Posterior vena cava (tissue), 2 donors: ENCODE measurements at regions of chr3 and their contacts with region 1.

Region 1: GRCh38 chr3:40179016-40179415 is 130.5 kb upstream of the EIF1B start:
- DNase-seq: peak; percentile 88

Region 2: GRCh38 chr3:39707314-39707909 is 471.6 kb before region 1 on chr3:
- intact Hi-C with region 1: loop called in 1 of 2 experiments (anchors 5 kb)
- DNase-seq: no peak

Region 3: DNA sequence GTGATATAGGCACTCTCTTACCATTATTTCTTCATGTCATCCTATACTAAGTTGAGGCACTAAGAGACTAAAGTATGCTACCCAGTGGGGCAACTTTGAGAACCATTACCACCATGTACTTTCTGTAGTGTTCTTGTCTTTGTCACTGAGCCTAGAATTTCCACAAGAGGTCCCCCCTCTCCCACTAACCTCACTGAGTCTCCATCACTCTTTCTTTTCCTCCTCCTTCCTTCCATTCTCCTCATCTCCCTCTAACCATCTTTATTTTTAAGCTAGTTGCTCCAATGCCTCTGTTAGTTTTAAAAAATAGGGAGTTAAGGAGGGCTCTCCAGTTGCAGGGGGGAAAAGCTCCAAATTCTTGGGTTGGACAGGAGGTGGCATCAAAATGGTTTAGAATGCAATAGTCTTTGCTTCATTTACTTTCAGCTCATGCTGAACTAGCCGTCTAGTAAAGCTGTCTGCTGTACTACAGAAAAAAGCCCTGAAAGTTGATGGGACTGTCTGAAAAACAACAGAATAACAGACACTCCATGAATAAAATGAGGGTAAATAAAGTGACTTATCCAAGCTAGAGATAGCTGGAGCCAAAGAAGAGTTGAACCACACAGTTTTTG is 454.7 kb before region 1 on chr3:
- intact Hi-C with region 1: loop called in 1 of 2 experiments (anchors 10 kb)
- DNase-seq: no peak

Region 4: DNA sequence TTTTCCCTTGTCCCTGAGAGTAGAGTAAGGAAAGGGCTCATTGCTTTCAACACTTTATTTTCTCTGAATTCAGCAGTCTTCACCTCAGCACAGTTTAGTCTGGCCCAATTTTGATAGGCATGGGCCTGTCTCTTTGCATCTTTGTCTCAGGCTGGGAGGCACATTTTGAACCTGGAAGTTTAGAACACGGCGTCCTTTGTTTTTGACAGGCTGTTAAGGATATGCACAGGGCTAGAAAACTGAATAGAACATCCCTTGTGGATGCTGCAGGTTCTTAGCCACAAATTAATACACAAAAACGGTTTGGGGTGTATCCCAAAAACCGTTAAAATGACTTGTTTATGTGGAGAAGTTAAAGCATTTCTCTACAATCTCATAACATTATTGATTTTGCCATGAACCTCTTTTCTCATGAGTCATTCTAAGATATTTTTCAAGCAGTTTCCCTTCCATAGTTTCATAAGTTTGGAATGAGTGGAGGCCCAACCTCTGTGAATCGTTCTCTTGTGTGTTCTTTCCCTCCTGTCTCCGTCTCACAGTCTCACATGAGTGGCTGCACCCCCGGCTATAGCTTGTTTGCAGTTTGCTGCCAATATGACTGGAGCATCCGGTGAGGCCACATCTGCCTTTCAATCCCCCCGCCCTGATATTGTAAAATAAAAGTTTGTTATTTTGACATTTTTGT is 62.4 kb before region 1 on chr3:
- intact Hi-C with region 1: no loop called
- DNase-seq: no peak

Region 5: GRCh38 chr3:40247714-40248454 is 68.9 kb after region 1 on chr3:
- intact Hi-C with region 1: no loop called
- DNase-seq: no peak